Lower leg skin (tissue), 4 donors: ENCODE measurements at regions of chr4 and their contacts with region 1.

Region 1: DNA sequence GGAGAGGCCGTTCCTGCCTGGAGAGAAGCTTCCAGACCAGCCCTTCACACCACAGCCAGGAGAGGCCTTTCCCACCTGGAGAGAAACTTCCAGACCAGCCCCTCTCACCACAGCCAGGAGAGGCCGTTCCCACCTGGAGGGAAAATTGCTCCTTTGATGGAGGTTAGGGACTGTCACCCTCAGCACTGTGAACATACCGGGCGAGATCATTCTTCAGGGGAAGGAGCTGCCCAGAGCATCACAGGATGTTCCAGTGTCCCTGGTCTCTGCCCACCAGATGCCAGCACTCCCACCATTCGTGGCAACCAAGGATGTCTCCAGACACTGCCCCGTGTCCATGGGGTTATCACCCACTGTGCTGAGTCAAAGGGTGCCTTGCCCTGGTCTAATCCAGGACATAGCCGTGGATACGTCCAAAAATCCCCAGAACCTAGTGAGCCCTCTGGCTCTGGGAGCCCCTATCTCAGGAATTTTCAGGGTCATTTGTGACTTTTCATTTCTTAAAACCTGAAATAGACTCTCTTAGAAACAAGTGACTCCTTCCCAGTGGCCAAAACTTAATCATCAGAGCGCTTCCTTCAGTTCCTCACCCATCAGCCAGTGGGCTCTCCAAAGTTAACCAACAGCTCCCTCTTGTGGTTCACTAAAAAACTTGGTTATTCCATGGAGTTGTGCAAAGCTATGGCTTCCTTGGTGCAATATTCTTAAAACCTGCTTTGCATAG is 80.2 kb downstream of the CRMP1 start:
- DNase-seq: no peak
- H3K4me3 ChIP-seq: no peak overlapping the region
- CTCF ChIP-seq: no peak
- POLR2A ChIP-seq: no peak

Region 2: DNA sequence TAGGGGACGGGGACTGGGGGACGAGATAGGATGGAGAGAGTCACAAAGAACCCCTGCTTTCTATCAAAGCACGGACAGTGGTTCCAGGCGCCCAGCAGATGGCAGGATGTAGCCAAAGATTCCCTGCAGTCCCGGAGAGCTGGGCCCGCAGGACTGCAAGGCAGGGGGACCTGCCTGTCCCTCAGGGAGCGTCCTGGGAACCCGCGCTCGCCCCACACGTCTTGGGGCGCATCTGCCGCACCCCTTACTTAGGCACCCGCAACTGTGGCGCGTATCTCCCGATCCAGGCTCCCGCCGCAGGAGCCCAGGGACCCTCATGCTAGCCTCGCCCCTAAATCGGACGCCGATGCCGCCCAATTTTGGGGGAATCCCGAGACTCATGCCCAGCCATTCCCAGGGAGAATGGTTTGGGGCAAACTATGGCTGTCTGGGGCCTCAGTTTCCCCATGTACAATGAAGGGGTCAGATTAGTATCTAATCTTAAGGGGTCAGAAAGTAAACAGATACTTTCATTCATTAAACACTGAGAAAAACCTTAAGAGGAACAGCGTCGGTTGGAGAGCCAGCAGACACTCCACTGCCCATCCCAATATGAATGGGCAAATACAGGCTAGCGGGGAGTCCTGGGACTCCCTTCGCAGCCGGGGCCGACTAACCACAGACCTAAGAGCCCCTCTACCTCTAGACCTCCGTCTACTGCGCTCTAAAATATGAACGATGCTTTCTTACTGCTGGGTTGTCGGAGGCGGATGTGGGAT is 762.0 kb before region 1 on chr4:
- intact Hi-C with region 1: loop called (anchors 10 kb)
- DNase-seq: peak; percentile 48 to 93
- H3K4me3 ChIP-seq: peak overlapping the region; percentile 31
- CTCF ChIP-seq: no peak
- POLR2A ChIP-seq: no peak

Region 3: DNA sequence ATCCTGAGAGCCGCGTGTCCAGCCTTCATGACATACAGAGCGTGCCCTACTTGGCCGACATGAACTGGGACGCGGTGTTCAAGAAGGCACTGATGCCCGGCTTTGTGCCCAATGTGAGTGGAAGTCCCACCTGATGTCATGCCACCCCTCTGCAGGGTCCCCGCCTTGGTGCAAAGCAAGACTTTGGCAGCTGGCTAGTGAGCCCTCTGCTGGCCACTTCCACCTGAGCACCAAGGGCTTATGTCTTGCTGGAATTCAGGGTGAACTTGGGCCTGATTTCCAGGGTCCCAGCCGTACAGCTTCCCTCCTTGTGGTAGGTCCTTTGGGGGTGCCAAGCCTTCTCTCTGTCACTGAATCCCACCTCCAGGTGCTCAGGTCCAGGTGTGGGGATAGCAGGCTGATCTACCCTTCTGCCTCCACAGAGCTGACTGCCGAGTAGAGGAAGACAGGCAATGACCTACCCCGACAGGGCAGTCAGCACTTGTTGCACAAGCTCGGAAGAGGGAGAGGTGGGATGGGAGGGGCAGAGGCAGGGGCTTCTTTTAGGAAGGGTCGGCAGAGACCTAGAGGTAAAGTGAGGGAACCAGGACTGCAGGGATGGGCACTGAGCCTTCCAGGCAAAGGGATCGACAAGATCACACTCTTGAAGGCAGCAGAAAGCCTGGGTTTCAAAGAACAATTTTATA is 352.4 kb before region 1 on chr4:
- intact Hi-C with region 1: loop called (anchors 10 kb)
- DNase-seq: peak in 1 of 2 donors; percentile 67
- H3K4me3 ChIP-seq: no peak overlapping the region
- CTCF ChIP-seq: no peak
- POLR2A ChIP-seq: no peak

Region 4: GRCh38 chr4:5858020-5858769 is 45.5 kb after region 1 on chr4:
- intact Hi-C with region 1: no loop called
- DNase-seq: no peak
- H3K4me3 ChIP-seq: no peak overlapping the region
- CTCF ChIP-seq: no peak
- POLR2A ChIP-seq: no peak

Region 5: DNA sequence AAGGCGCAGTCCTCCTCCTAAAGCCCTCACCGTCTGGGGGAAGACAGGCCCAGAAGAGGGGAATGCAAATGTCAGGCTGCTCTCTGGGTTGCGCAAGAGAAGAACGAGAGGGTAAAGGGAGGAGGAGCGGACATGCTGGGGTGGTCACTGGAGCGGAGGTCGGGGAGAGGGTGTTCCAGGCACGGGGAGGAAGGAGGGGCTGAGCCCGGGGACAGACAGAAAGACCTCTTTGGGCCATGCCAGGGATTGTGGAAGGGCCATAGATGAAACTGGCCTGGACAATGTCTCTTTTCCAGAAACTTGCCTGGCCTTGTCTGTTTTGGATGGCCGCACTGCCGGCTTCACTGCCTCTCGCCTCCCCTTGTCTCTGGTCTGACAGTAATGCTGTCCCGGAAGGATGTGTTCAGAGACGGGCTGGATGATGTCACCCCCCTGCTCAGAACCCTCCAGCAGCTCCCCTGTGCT is 1500.7 kb after region 1 on chr4:
- intact Hi-C with region 1: no loop called
- DNase-seq: no peak
- H3K4me3 ChIP-seq: no peak overlapping the region
- CTCF ChIP-seq: no peak
- POLR2A ChIP-seq: no peak